Activated B cell treated with CpG ODN at 0.5 μM for 24 hours (primary cell): ENCODE measurements at regions of chr10 and their contacts with region 1.

Region 1: GRCh38 chr10:119596537-119597404 is at the start of gene TIAL1:
- DNase-seq: peak; percentile 84
- ATAC-seq: peak; percentile 84
- H3K4me3 Mint-ChIP-seq: peak within 1 kb of the TSS; percentile 95
- H3K27ac Mint-ChIP-seq: peak within 1 kb of the TSS; percentile 97
- H3K4me1 Mint-ChIP-seq: peaks cover 54% of the 10 kb centered on the region
- H3K27me3 Mint-ChIP-seq: no peaks in the 10 kb centered on the region
- CTCF ChIP-seq: no peak
- total RNA-seq, gene TIAL1: 142 and 155 TPM in 2 replicates

Region 2: GRCh38 chr10:118046395-118047156 is 1550.2 kb before region 1 on chr10 and contains the start of gene RAB11FIP2:
- CTCF ChIA-PET with region 1: no interaction called
- POLR2A ChIA-PET with region 1: no interaction called
- intact Hi-C with region 1: loop called (anchors 10 kb)
- DNase-seq: peak; percentile 98
- ATAC-seq: peak; percentile 92
- H3K4me3 Mint-ChIP-seq: peak within 1 kb of the TSS; percentile 89
- H3K27ac Mint-ChIP-seq: peak within 1 kb of the TSS; percentile 66
- H3K4me1 Mint-ChIP-seq: peaks cover 38% of the 10 kb centered on the region
- H3K27me3 Mint-ChIP-seq: no peaks in the 10 kb centered on the region
- CTCF ChIP-seq: no peak
- total RNA-seq, gene RAB11FIP2: 20.4 and 33.2 TPM in 2 replicates

Region 3: GRCh38 chr10:119103903-119104652 is 492.7 kb before region 1 on chr10 and contains the start of gene DENND10:
- CTCF ChIA-PET with region 1: no interaction called
- POLR2A ChIA-PET with region 1: no interaction called
- intact Hi-C with region 1: loop called (anchors 1 kb)
- DNase-seq: peak; percentile 69
- ATAC-seq: peak; percentile 91
- H3K4me3 Mint-ChIP-seq: peak within 1 kb of the TSS; percentile 75
- H3K27ac Mint-ChIP-seq: peak within 1 kb of the TSS; percentile 68
- H3K4me1 Mint-ChIP-seq: peaks cover 16% of the 10 kb centered on the region
- H3K27me3 Mint-ChIP-seq: no peaks in the 10 kb centered on the region
- CTCF ChIP-seq: no peak
- total RNA-seq, gene DENND10: 14.4 and 15.0 TPM in 2 replicates

Region 4: DNA sequence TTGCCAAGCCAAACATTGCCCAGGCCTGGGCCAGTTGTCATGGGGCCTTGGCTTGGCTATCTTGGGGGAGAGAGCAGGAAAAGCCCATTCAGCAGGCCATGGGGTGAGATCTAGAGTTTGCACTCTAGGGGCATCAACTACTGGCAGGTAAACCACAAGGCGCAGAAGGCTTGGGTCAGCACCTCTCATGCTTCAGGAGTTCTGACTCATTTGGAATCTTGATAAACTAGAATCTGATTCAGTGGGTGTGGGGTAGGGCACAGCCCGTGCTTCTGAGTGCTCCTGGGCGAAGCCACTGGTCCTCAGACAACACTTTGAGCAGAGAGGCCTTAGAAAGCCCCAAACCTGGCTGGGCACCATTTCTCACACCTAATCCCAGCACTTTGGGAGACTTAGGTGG is 135.4 kb before region 1 on chr10:
- CTCF ChIA-PET with region 1: no interaction called
- POLR2A ChIA-PET with region 1: no interaction called
- intact Hi-C with region 1: loop called (anchors 5 kb)
- DNase-seq: no peak
- ATAC-seq: peak; percentile 92
- H3K4me3 Mint-ChIP-seq: peak overlapping the region; percentile 33
- H3K27ac Mint-ChIP-seq: peak overlapping the region; percentile 78
- H3K4me1 Mint-ChIP-seq: peaks cover 39% of the 10 kb centered on the region
- H3K27me3 Mint-ChIP-seq: peaks cover 7% of the 10 kb centered on the region
- CTCF ChIP-seq: no peak

Region 5: GRCh38 chr10:119578355-119578754 is 18.4 kb before region 1 on chr10:
- CTCF ChIA-PET with region 1: no interaction called
- POLR2A ChIA-PET with region 1: no interaction called
- intact Hi-C with region 1: no loop called
- DNase-seq: no peak
- ATAC-seq: no peak
- H3K4me3 Mint-ChIP-seq: no peak overlapping the region
- H3K27ac Mint-ChIP-seq: no peak overlapping the region
- H3K4me1 Mint-ChIP-seq: peaks cover 3% of the 10 kb centered on the region
- H3K27me3 Mint-ChIP-seq: no peaks in the 10 kb centered on the region
- CTCF ChIP-seq: no peak

Region 6: DNA sequence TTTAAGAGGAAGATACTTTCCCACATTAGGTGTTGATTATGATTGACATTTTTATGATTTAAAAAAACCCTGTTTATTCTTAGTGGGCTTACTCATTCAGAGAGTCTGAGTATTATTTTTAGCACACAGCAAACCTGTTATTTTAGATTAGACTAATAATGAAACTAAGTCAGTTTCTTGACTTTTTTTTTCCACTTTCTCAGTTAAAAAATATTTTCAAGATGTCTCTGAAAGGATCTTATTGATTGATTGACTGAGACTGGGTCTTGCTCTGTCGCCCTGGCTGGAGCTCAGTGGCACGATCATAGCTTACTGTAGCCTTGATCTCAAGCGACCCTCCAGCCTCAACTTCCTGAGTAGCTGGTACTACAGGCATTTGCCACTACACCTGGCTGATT is 108.7 kb after region 1 on chr10:
- CTCF ChIA-PET with region 1: no interaction called
- POLR2A ChIA-PET with region 1: interaction called, 4 read pairs
- intact Hi-C with region 1: loop called (anchors 2 kb)
- DNase-seq: peak; percentile 31
- ATAC-seq: peak; percentile 25
- H3K4me3 Mint-ChIP-seq: peak overlapping the region; percentile 59
- H3K27ac Mint-ChIP-seq: peak overlapping the region; percentile 97
- H3K4me1 Mint-ChIP-seq: peaks cover 95% of the 10 kb centered on the region
- H3K27me3 Mint-ChIP-seq: no peaks in the 10 kb centered on the region
- CTCF ChIP-seq: no peak

Region 7: GRCh38 chr10:119769886-119770285 is 173.1 kb after region 1 on chr10:
- CTCF ChIA-PET with region 1: no interaction called
- POLR2A ChIA-PET with region 1: no interaction called
- intact Hi-C with region 1: no loop called
- DNase-seq: no peak
- ATAC-seq: no peak
- H3K4me3 Mint-ChIP-seq: no peak overlapping the region
- H3K27ac Mint-ChIP-seq: no peak overlapping the region
- H3K4me1 Mint-ChIP-seq: peaks cover 24% of the 10 kb centered on the region
- H3K27me3 Mint-ChIP-seq: no peaks in the 10 kb centered on the region
- CTCF ChIP-seq: no peak

Region 8: DNA sequence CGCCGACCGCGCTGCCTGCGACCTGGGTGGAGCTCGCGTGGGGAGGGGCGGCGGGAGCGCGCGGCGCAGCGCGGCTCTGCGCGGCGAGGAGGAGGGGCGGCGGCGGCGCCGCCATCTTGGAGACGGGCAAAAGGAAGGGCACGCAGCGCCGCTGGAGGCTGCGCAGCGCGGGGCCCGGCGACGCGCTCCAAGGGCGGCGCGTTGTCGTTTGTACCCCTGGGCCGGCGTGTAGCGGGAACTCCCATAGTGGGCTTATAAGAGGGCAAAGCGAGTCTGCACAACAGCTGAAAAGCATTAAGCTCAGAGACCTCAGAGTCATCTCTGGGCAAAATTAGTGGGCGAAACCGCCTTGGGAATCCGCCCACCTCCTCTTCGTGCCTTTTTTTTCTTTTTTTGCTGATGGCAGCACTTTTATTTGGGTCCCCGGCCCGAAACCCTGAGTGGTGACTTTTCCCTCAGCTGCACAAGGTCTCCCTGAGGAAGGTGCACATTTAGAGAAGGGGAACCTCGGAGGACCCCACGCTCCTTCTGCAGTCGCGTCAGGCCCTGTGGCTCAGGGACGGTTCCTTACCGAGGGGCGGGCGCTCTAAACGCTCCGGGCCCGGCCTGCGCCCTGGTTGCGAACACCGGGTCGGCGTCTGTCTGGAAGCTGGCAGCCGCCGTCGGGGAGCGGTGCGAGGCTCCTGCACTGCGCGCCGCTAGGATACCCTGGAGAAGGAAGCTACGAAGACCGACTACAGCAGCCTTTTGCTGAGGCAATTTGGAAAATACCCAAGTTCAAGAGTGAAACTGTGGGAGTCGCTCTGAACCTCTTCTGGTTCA is 276.3 kb after region 1 on chr10:
- CTCF ChIA-PET with region 1: no interaction called
- POLR2A ChIA-PET with region 1: interaction called, 10 read pairs
- intact Hi-C with region 1: loop called (anchors 1 kb)
- DNase-seq: peak; percentile 89
- ATAC-seq: peak; percentile 92
- H3K4me3 Mint-ChIP-seq: peak overlapping the region; percentile 88
- H3K27ac Mint-ChIP-seq: peak overlapping the region; percentile 85
- H3K4me1 Mint-ChIP-seq: peaks cover 40% of the 10 kb centered on the region
- H3K27me3 Mint-ChIP-seq: no peaks in the 10 kb centered on the region
- CTCF ChIP-seq: no peak